ENCODE measurements at regions of chr12 and their contacts with region 1.

Region 1: DNA sequence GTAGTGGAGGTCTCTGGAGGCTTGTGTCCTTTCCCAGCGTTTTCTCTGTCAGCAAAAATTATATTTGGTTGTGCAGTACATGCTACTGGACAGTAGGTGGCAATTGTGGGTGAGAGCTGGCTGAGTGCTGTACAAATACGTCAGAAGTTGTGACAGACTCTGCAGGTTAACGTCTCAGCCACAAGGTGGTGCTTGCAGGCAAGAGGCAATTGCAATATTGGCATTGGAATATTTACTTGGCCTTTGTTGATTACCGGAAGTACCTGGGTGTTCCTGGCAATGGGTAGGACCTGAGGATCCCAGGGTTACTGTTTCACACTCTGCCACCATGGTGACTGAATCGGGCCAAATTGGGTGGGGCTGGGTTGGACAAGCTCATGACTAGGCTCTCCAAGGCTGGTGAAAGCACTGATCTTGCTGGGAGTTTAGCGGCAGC is 333.9 kb upstream of the LMO3 start:
- DNase-seq: peak; percentile 76
- H3K4me3 Mint-ChIP-seq: no peak overlapping the region
- H3K27ac Mint-ChIP-seq: no peak overlapping the region
- H3K4me1 Mint-ChIP-seq: no peaks in the 10 kb centered on the region
- H3K27me3 Mint-ChIP-seq: no peaks in the 10 kb centered on the region
- CTCF ChIP-seq: peak; percentile 92

Region 2: DNA sequence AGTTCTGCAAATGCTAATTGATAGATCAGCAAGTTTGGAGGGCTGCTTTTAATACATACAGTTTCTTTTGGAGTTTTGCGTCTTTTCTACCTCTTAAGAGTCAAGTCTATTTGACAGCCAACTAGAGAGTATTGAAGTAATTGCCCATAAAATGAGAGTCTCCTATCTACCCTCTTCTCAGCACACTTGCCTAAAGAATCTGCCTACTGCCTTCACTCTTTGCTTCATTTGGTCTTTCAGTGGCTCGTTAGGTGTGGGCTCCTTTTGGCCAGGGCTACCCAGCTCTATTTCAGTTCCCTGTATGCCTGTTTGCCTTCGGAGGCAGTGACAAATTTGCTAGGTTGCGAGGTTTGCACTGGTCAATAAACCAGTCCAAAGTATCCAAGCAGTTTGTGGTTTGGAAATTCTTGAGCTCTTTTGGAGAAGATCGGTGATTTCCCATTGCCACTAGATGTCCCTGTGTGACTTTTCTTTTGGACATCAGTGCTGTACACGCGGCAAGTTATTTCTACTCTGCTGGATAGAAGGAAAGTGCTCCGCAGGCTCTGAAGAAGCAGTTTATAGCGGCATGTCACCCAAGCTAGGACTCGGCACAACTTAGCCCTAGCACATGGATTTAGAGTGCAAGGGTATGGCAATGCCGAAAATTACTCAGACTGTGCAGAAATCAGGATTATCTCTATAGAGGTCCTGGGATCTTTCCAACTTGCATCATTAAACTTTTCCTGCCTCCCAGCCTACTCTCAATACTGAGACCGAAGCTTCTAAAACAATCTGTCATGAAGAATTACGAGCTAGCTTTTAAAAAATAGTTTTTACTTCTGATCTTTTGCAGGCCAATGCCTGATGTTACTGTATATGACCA is 553.9 kb before region 1 on chr12:
- CTCF ChIA-PET with region 1: interaction called, 3 read pairs
- intact Hi-C with region 1: loop called (anchors 10 kb)
- DNase-seq: peak; percentile 47
- H3K4me3 Mint-ChIP-seq: peak overlapping the region; percentile 23
- H3K27ac Mint-ChIP-seq: peak overlapping the region; percentile 18
- H3K4me1 Mint-ChIP-seq: peaks cover 41% of the 10 kb centered on the region
- H3K27me3 Mint-ChIP-seq: no peaks in the 10 kb centered on the region
- CTCF ChIP-seq: peak; percentile 44

Region 3: DNA sequence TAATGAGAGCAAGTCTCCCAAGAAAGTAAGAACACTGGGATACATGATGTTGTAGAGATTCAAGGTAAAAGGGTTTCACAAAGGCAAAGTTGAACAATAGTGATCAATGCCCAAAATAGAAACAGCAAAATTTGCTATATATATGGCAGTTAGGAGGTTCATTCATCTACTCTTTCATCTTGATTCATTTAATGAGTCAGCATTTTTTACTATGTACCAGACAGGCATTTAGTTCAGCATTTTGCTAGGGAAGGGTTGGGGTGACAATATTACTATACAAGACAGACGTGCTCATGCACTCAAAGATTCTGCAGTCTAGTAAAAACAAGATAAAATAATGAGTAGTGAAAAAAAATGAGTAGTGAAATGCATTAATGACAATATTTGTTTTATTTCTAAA is 69.0 kb before region 1 on chr12:
- CTCF ChIA-PET with region 1: no interaction called
- intact Hi-C with region 1: no loop called
- DNase-seq: no peak
- H3K4me3 Mint-ChIP-seq: no peak overlapping the region
- H3K27ac Mint-ChIP-seq: no peak overlapping the region
- H3K4me1 Mint-ChIP-seq: no peaks in the 10 kb centered on the region
- H3K27me3 Mint-ChIP-seq: no peaks in the 10 kb centered on the region
- CTCF ChIP-seq: no peak

Region 4: GRCh38 chr12:17076028-17076744 is 136.3 kb after region 1 on chr12:
- CTCF ChIA-PET with region 1: no interaction called
- intact Hi-C with region 1: no loop called
- DNase-seq: peak; percentile 53
- H3K4me3 Mint-ChIP-seq: no peak overlapping the region
- H3K27ac Mint-ChIP-seq: no peak overlapping the region
- H3K4me1 Mint-ChIP-seq: peaks cover 17% of the 10 kb centered on the region
- H3K27me3 Mint-ChIP-seq: no peaks in the 10 kb centered on the region
- CTCF ChIP-seq: no peak

Region 5: DNA sequence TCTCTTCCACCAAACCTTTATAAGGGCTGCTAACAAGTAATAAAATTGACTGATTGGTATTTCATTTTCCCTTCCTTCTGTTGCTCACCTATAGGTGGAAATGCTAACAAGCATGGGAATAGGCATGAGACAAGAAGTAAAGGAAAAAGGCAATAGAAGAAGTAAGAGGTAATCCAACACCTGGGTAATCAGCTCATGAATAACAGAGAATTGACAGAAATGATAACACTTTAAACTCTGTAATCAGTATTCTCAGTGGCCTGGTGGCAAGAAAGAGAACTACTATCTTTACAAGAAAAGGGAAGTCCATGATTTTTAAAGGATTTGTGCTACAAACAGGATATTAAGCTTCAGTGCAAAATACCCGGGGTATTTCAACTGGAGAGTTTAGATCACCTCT is 412.3 kb after region 1 on chr12:
- CTCF ChIA-PET with region 1: no interaction called
- intact Hi-C with region 1: no loop called
- DNase-seq: no peak
- H3K4me3 Mint-ChIP-seq: no peak overlapping the region
- H3K27ac Mint-ChIP-seq: no peak overlapping the region
- H3K4me1 Mint-ChIP-seq: no peaks in the 10 kb centered on the region
- H3K27me3 Mint-ChIP-seq: no peaks in the 10 kb centered on the region
- CTCF ChIP-seq: no peak

Region 6: DNA sequence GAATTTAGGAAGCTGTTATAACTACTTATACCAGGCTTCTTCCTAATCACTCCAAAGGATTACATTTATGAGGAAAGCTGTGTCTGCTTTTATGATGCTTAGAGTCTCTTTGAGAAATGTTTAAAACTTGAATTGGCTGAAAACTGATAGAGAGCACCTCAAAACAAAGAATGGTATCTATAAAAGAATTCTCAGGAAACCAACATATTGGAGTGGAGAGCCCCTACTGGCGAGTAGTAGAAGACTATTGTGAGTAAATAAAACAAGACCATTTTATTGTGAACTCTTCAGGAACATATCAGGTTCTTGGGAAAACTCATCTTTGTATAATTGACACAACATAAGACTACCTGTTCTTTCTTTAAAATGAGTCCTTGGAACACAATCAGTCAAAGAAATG is 571.5 kb after region 1 on chr12:
- CTCF ChIA-PET with region 1: no interaction called
- intact Hi-C with region 1: loop called (anchors 5 kb)
- DNase-seq: no peak
- H3K4me3 Mint-ChIP-seq: no peak overlapping the region
- H3K27ac Mint-ChIP-seq: no peak overlapping the region
- H3K4me1 Mint-ChIP-seq: no peaks in the 10 kb centered on the region
- H3K27me3 Mint-ChIP-seq: no peaks in the 10 kb centered on the region
- CTCF ChIP-seq: no peak

Region 7: DNA sequence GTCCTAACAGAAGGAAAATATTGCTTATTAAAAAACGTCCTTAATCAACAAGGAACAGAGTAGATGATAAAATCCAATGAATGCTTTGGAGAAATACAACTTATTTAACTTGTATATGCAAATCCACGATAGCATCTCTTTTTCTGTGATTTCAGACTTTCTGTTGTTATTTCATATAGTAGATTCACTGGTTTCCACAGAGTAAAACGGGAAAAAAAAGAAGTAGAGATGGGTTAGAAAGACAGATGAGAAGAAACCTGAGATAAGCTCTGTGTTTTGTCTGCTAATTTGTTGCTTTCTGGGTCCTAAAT is 702.4 kb after region 1 on chr12:
- CTCF ChIA-PET with region 1: no interaction called
- intact Hi-C with region 1: loop called (anchors 5 kb)
- DNase-seq: no peak
- H3K4me3 Mint-ChIP-seq: peak overlapping the region; percentile 57
- H3K27ac Mint-ChIP-seq: no peak overlapping the region
- H3K4me1 Mint-ChIP-seq: no peaks in the 10 kb centered on the region
- H3K27me3 Mint-ChIP-seq: no peaks in the 10 kb centered on the region
- CTCF ChIP-seq: no peak

Region 8: GRCh38 chr12:17992002-17992656 is 1052.2 kb after region 1 on chr12:
- CTCF ChIA-PET with region 1: interaction called, 3 read pairs
- intact Hi-C with region 1: loop called (anchors 10 kb)
- DNase-seq: peak; percentile 55
- H3K4me3 Mint-ChIP-seq: no peak overlapping the region
- H3K27ac Mint-ChIP-seq: no peak overlapping the region
- H3K4me1 Mint-ChIP-seq: no peaks in the 10 kb centered on the region
- H3K27me3 Mint-ChIP-seq: no peaks in the 10 kb centered on the region
- CTCF ChIP-seq: peak; percentile 77

Measured in Calu3 (cell line).